ENCODE measurements at regions of chr4 and their contacts with region 1.

Region 1: DNA sequence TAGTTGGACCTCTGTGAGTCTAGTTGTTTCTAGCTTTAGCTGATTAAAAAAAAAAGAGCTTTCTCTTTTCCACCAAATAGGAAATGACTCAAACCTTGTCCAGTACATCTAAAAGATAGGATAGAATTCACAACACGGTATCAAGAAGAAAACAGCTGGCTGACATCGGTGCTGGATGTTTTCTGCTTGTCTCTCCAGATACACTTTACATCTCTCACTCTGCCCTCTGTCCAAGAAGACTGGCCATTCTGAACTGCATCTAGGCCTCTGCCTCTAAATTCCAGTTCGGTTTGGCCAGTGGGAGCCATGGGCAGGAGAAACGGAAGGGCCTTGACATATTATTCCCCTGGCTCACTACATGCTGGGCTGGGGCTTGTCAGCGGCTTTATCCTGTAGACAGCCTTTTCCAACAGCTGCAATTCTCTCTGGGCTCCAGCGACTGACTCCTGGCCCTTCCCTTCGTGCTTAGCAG is 57.3 kb upstream of the SHISA3 start:
- DNase-seq: no peak
- CTCF ChIP-seq: no peak

Region 2: GRCh38 chr4:42327323-42327722 is 12.6 kb before region 1 on chr4:
- CTCF ChIA-PET with region 1: interaction called, 17 read pairs
- POLR2A ChIA-PET with region 1: no interaction called
- DNase-seq: no peak
- CTCF ChIP-seq: no peak

Region 3: DNA sequence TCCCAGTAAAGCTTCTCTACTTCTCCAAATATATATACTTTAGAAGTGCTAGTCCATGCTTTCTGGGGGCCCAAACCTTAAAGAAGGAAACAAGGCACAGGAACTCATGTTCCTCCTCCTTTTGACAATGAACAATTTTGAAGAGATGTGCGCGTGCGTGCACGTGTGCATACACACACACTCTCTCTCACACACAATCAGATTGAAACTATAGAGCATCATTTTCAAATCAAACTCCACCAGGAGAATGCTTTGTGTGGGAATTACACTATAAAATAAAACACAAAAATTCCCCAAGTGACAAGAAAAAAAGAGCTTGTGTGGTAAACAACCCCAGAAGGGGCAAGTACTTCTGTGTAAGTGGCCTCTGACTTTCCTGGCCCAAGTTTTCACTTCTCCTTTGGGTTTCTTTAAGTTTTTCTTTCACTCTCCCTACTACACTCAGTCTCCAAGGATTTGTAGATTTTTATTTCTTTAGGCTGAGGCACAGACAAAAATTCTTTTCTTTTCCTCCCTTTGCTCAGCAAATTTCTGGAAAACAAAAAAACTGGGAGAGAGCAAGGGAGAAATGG is 10.7 kb after region 1 on chr4:
- CTCF ChIA-PET with region 1: interaction called, 15 read pairs
- POLR2A ChIA-PET with region 1: no interaction called
- DNase-seq: peak; percentile 31
- CTCF ChIP-seq: no peak

Region 4: GRCh38 chr4:42362591-42362990 is 22.6 kb after region 1 on chr4:
- CTCF ChIA-PET with region 1: no interaction called
- POLR2A ChIA-PET with region 1: no interaction called
- DNase-seq: no peak
- CTCF ChIP-seq: no peak

Region 5: GRCh38 chr4:42843694-42844093 is 503.7 kb after region 1 on chr4:
- CTCF ChIA-PET with region 1: no interaction called
- POLR2A ChIA-PET with region 1: no interaction called
- DNase-seq: no peak
- CTCF ChIP-seq: no peak